ENCODE measurements at regions of chr5 and their contacts with region 1.

Region 1: DNA sequence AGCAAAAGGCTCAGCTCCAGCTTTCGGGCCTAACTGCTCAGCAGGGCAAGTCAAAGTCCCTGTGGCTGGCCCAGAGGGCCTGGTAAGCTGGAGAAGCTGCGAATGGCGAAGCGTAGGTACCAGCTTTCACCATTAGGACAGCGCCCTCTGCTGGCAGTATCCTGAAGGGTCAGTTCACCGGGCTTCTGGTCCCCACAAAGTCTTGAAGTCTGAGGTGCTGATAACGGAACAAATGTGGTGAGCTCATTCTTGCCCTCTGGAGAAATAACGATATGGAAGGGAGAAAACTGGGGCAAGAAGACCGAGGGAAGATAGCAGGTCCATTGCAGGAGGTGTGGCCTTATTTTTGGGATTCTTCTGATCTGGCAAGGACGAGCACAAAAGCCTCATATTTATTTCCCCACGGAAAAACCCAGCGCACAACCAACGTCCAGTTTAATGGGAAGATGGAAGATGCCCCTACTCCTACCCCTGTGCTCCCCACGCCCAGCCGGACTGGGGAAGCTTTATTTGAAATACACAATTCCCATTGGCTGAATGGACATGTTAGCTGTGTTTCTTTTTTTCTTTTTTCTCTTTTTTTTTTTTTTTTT is 7.2 kb downstream of the SOWAHA start:
- DNase-seq: peak; percentile 75 to 97
- H3K4me3 ChIP-seq: no peak overlapping the region
- H3K27ac ChIP-seq: no peak overlapping the region
- H3K4me1 ChIP-seq: peaks cover 0 to 13% (median 11%) of the 10 kb centered on the region in 4 experiments; a peak in 6 of 7 replicates
- H3K27me3 ChIP-seq: peaks cover 4 to 32% (median 26%) of the 10 kb centered on the region in 4 experiments
- CTCF ChIP-seq: peak in 2 of 3 experiments; percentile 93 to 94; a peak in 3 of 4 replicates
- EP300 ChIP-seq: no peak
- POLR2A ChIP-seq: no peak
- RAD21 ChIP-seq: peak; percentile 89 to 93

Region 2: DNA sequence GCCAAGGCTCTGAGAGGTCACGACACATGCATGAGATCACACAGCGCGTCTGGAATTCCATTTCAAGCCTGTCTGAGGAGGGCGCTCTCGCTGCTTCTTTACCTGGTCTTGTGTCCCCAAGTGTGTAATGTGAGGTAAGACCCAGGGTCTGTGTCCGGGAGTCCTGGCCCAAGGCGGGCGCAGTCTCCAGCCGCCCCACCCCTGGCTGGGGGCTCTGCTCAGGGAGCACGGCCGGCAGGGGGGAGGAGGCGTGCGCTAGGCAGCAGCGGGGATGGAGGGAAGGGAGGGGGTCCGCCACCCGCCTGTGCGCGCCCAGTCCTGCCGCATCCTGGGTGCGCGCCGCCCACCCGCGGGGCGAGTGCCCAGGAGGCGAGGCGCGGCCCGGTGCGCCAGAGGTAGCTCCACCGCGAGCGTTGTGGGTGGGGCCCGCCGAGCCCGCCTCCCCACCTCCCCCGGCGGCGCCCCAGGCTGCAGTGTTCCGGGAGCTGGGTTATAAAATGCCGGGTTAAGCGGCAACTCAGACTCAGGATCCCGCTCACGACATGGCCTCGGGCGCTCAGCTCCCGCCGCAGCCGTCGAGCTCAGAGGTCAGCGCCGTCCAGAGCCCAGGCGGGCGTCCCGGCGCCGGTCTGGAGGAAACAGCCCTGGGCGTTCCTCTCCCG is 73.2 kb before region 1 on chr5 and contains the start of gene CCNI2:
- CTCF ChIA-PET with region 1: interaction called, 322 read pairs
- POLR2A ChIA-PET with region 1: no interaction called
- DNase-seq: peak in 1 of 2 experiments; percentile 78
- H3K4me3 ChIP-seq: peak within 1 kb of the TSS; percentile 35 to 65 (median 46)
- H3K27ac ChIP-seq: no peak within 1 kb of the TSS
- H3K4me1 ChIP-seq: peaks cover 0 to 4% (median 0%) of the 10 kb centered on the region in 4 experiments; a peak in 2 of 7 replicates
- H3K27me3 ChIP-seq: peaks cover 23 to 45% (median 36%) of the 10 kb centered on the region in 4 experiments
- CTCF ChIP-seq: peak; percentile 71 to 80 (median 74)
- EP300 ChIP-seq: no peak
- POLR2A ChIP-seq: no peak
- RAD21 ChIP-seq: peak; percentile 66 to 76
- total RNA-seq, gene CCNI2: 1.4 TPM in 2 replicates

Region 3: GRCh38 chr5:132777209-132778069 is 42.8 kb before region 1 on chr5 and contains the start of gene SEPTIN8:
- CTCF ChIA-PET with region 1: interaction called, 10 read pairs
- POLR2A ChIA-PET with region 1: interaction called, 8 read pairs
- DNase-seq: peak in 1 of 2 experiments; percentile 73
- H3K4me3 ChIP-seq: peak within 1 kb of the TSS; percentile 68 to 75 (median 73)
- H3K27ac ChIP-seq: no peak within 1 kb of the TSS
- H3K4me1 ChIP-seq: peaks cover 0 to 9% (median 2%) of the 10 kb centered on the region in 4 experiments; a peak in 5 of 7 replicates
- H3K27me3 ChIP-seq: peaks cover 2 to 51% (median 34%) of the 10 kb centered on the region in 4 experiments
- CTCF ChIP-seq: no peak
- EP300 ChIP-seq: no peak
- POLR2A ChIP-seq: no peak
- RAD21 ChIP-seq: no peak
- total RNA-seq, gene SEPTIN8: 33.0 and 33.8 TPM in 2 replicates

Region 4: GRCh38 chr5:132807163-132807838 is 13.0 kb before region 1 on chr5:
- CTCF ChIA-PET with region 1: interaction called, 82 read pairs
- POLR2A ChIA-PET with region 1: interaction called, 9 read pairs
- DNase-seq: no peak
- H3K4me3 ChIP-seq: no peak overlapping the region
- H3K27ac ChIP-seq: no peak overlapping the region
- H3K4me1 ChIP-seq: peaks cover 0 to 5% (median 2%) of the 10 kb centered on the region in 4 experiments; a peak in 5 of 7 replicates
- H3K27me3 ChIP-seq: peaks cover 7 to 14% (median 11%) of the 10 kb centered on the region in 4 experiments
- CTCF ChIP-seq: peak; percentile 48 to 70 (median 61)
- EP300 ChIP-seq: no peak
- POLR2A ChIP-seq: no peak
- RAD21 ChIP-seq: peak; percentile 40 to 52